ENCODE measurements at regions of chr3 and their contacts with region 1.

Region 1: GRCh38 chr3:40505599-40506462 is at the start of gene ZNF620:
- DNase-seq: peak; percentile 81 to 88 (median 83)
- ATAC-seq: peak; percentile 91 to 97 (median 94)
- H3K4me3 ChIP-seq: peak within 1 kb of the TSS; percentile 54 to 83 (median 72)
- H3K27ac ChIP-seq: peak within 1 kb of the TSS; percentile 42 to 80 (median 74)
- H3K4me1 ChIP-seq: peaks cover 0 to 24% (median 12%) of the 10 kb centered on the region in 12 donors
- H3K27me3 ChIP-seq: no peaks in the 10 kb centered on the region
- CTCF ChIP-seq: peak in 10 of 12 donors; percentile 15 to 58 (median 32)
- POLR2A ChIP-seq: peak in 1 of 2 donors; percentile 53
- total RNA-seq, gene ZNF620: 1.1 to 4.4 (median 2.5) TPM

Region 2: DNA sequence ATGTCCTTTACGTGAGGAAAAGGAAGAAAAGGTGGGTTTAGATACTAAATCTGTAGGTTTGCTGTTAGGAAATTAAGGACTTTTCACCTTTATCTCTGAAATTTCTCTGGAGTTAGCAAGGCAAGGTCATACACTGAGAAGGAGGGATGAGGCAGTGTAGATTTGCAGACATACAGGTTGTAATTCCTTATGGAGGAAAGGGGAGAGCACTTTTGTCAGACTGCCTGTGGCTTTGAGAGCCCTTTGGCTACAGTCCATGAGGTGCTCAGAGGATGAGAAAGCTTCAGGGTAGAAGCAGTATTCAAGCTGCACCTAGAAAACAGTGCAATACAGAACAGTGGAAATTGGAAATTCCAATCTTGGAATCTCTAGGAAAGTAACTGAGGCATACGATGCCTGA is 40.4 kb before region 1 on chr3:
- intact Hi-C with region 1: no loop called
- DNase-seq: no peak
- ATAC-seq: no peak
- H3K4me3 ChIP-seq: no peak overlapping the region
- H3K27ac ChIP-seq: no peak overlapping the region
- H3K4me1 ChIP-seq: peaks cover 0 to 8% (median 0%) of the 10 kb centered on the region in 12 donors
- H3K27me3 ChIP-seq: no peaks in the 10 kb centered on the region
- CTCF ChIP-seq: no peak
- POLR2A ChIP-seq: no peak

Region 3: GRCh38 chr3:40524568-40525285 is 18.9 kb after region 1 on chr3 and contains the start of gene ZNF621:
- intact Hi-C with region 1: loop called in 1 of 10 experiments (anchors 1 kb)
- DNase-seq: peak; percentile 93 to 96 (median 94)
- ATAC-seq: peak; percentile 96 to 100 (median 100)
- H3K4me3 ChIP-seq: peak within 1 kb of the TSS; percentile 54 to 95 (median 84)
- H3K27ac ChIP-seq: peak within 1 kb of the TSS; percentile 70 to 94 (median 86)
- H3K4me1 ChIP-seq: peaks cover 0 to 19% (median 13%) of the 10 kb centered on the region in 12 donors
- H3K27me3 ChIP-seq: no peaks in the 10 kb centered on the region
- CTCF ChIP-seq: peak in 1 of 12 donors; percentile 15
- POLR2A ChIP-seq: peak in 1 of 2 donors; percentile 87
- total RNA-seq, gene ZNF621: 7.6 to 14.3 (median 9.7) TPM